Activated CD4-positive, alpha-beta memory T cell treated with anti-CD3 and anti-CD28 coated beads for 36 hours (primary cell): ENCODE measurements at regions of chr4 and their contacts with region 1.

Region 1: GRCh38 chr4:4461850-4462249 is 74.9 kb downstream of the NSG1 start:
- DNase-seq: peak; percentile 80
- H3K4me3 Mint-ChIP-seq: peak overlapping the region; percentile 42
- H3K27ac Mint-ChIP-seq: peak overlapping the region; percentile 74
- H3K4me1 Mint-ChIP-seq: peaks cover 43% of the 10 kb centered on the region
- H3K27me3 Mint-ChIP-seq: no peaks in the 10 kb centered on the region

Region 2: DNA sequence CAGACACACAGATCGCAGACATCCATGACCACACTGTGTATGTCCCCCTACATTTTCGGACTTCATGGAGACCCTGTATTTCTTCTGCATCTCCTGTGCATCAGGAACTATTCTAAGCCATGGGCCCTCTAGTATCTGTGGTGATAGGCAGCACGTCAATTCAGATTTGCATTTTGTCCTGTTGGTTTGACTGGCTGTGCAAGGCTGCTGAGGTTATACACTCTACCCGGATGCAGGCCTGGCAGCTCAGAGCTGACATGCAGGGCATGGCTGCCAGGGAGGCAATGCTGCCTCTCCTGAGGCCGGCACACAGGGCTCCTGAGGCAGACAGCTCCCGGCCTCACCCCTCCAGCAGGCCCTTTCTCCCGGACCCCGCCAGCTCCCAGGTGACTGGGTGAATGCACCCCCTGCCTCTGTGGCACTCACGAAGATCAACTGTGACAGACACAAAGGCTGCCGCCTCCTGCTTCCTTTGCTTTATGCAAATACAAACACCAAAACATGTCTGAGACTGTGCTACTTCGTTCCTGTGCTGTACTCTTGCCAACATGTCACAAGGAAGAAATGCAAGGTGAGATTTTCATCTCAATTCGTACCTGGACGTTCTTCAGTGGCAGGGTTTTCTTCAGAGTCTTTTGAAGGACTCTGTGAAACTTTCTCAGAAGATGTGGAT is 23.9 kb before region 1 on chr4:
- CTCF ChIA-PET with region 1: no interaction called
- POLR2A ChIA-PET with region 1: no interaction called
- intact Hi-C with region 1: loop called (anchors 2 kb)
- DNase-seq: no peak
- H3K4me3 Mint-ChIP-seq: no peak overlapping the region
- H3K27ac Mint-ChIP-seq: no peak overlapping the region
- H3K4me1 Mint-ChIP-seq: peaks cover 29% of the 10 kb centered on the region
- H3K27me3 Mint-ChIP-seq: no peaks in the 10 kb centered on the region